ENCODE measurements at regions of chr2 and their contacts with region 1.

Region 1: GRCh38 chr2:156341452-156342253 is 9.1 kb upstream of the NR4A2 start:
- DNase-seq: peak; percentile 90
- ATAC-seq: peak; percentile 76
- H3K4me3 ChIP-seq: peak overlapping the region; percentile 95
- H3K27ac ChIP-seq: peak overlapping the region; percentile 98
- H3K4me1 ChIP-seq: peaks cover 43% of the 10 kb centered on the region
- H3K27me3 ChIP-seq: no peaks in the 10 kb centered on the region
- CTCF ChIP-seq: no peak

Region 2: DNA sequence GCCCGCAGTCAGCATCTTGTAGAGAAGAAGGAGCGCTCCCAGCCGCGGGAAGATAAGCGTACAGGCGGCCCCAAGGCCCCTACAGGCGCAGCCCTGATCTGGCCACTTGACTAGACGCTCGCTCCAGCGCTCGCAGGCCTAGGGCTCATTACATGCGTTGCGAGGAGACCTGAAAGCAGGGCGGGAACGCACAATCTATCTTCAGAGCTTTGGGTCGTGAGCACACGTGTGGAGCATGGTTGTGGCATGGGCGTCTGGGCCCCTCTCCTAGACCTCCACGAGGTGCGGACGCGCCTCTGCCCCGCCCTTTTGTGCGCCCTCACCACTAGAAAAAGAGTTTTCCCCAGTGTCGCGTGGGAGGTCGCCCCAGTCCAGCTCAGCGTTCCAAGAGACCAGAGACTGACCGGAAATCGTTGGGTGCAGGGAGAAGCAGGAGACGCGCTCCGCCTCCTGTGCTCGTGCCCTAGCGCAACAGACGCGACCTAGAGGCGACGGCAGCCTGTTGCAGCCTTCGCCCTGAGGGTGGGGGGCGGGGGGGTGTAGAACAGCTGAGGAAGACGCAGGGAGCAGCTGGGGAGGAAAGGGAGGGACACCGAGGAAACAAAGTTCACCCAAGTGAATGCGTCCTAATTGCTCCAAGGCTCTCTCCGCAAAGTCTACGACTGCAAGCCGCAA is 21.7 kb before region 1 on chr2:
- CTCF ChIA-PET with region 1: no interaction called
- POLR2A ChIA-PET with region 1: no interaction called
- intact Hi-C with region 1: no loop called
- DNase-seq: no peak
- ATAC-seq: no peak
- H3K4me3 ChIP-seq: no peak overlapping the region
- H3K27ac ChIP-seq: no peak overlapping the region
- H3K4me1 ChIP-seq: no peaks in the 10 kb centered on the region
- H3K27me3 ChIP-seq: no peaks in the 10 kb centered on the region
- CTCF ChIP-seq: no peak

Region 3: DNA sequence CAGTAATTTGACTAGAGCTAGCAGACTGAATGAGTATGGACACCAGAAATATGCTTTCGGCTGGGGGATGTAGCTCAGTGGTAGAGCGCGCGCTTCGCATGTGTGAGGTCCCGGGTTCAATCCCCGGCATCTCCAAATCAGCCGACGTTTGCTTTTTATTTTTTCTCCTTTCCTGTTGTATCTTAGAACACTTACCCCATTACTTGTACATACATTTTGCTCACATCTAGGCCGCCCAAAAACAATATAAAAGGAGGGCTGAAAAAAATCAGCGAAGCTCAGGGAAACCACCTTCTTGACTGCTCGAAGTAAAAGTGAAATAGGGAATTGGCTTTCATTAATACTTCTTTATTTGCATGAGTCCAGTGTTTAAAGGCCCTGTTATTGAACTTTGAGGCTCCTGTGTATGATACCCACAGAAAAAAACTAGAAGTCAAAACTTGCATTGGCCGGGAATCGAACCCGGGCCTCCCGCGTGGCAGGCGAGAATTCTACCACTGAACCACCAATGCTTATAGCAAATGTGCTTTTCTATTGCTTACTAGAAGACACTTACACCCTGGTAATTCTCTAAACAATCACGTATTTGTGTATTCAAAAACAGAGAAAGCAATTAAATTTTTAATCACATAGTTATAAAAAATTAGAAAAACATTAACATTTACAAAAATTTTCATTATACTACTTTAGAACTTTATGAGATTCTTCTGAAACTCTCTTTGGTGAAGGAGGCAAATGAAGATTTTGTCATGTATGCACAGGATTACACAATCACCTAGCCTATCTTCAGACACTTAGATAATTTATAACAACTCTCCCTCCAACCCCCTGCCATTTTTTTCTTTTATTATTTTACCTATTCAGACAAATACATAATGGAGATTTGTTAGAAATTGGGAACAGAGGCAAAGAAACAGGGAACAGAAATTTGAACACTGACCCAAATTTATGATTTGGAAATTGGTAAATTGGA is 59.3 kb after region 1 on chr2:
- CTCF ChIA-PET with region 1: no interaction called
- POLR2A ChIA-PET with region 1: interaction called, 5 read pairs
- intact Hi-C with region 1: loop called (anchors 1 kb)
- DNase-seq: peak; percentile 83
- ATAC-seq: peak; percentile 73
- H3K4me3 ChIP-seq: peak overlapping the region; percentile 74
- H3K27ac ChIP-seq: peak overlapping the region; percentile 91
- H3K4me1 ChIP-seq: peaks cover 21% of the 10 kb centered on the region
- H3K27me3 ChIP-seq: no peaks in the 10 kb centered on the region
- CTCF ChIP-seq: no peak

Region 4: DNA sequence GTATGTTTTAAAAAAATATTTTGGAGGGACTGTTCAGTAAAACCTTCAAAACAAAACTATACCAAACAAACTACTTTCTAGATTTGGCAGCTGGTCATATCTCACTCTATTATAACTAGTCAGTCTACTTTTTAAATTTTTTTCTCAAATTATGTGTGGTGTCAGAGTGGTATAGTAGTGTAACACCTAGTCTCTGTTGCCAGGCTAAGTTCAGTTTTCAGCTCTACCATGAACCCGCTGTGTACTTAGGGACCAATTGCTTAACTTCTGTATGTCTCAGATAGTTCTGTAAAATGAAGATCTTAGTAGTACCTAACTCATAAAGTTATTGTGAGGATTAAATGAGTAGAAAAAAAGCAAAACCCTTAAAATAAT is 148.8 kb after region 1 on chr2:
- CTCF ChIA-PET with region 1: no interaction called
- POLR2A ChIA-PET with region 1: interaction called, 26 read pairs
- intact Hi-C with region 1: no loop called
- DNase-seq: no peak
- ATAC-seq: no peak
- H3K4me3 ChIP-seq: no peak overlapping the region
- H3K27ac ChIP-seq: no peak overlapping the region
- H3K4me1 ChIP-seq: peaks cover 32% of the 10 kb centered on the region
- H3K27me3 ChIP-seq: no peaks in the 10 kb centered on the region
- CTCF ChIP-seq: no peak

Region 5: DNA sequence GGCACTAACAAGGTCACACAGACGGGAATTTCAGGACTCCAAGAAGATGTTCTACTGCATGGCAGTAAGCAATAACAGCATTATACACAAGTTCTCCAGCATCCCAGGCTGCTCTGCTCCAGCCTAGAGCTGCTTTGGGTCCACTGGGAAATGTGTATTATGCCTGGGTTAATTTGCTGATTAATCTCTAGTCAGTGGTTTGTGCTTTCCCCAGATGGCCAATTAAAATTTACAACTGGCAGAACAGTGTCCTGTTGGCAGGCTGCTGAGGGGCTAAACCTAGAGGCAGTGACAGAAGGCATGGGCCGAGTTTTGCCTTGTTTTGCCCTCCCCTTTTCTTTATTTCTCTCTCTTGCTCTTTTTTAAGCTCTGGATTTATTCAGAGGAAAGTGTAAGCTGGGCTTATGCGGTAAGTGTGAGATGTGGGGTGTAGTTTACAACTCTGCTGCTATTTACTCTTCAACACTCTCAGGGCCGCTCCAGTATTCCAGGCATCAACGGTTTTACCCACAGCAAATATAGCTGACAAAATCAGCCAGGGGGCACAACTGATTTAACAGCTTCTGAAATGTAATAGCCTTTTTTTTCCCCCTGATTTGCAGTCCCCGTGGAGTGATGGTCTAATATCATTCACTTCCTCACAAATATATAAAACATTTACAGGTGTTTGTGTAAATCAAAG is 442.5 kb after region 1 on chr2:
- CTCF ChIA-PET with region 1: no interaction called
- POLR2A ChIA-PET with region 1: no interaction called
- intact Hi-C with region 1: loop called (anchors 5 kb)
- DNase-seq: no peak
- ATAC-seq: peak; percentile 49
- H3K4me3 ChIP-seq: no peak overlapping the region
- H3K27ac ChIP-seq: no peak overlapping the region
- H3K4me1 ChIP-seq: peaks cover 38% of the 10 kb centered on the region
- H3K27me3 ChIP-seq: no peaks in the 10 kb centered on the region
- CTCF ChIP-seq: no peak

Region 6: GRCh38 chr2:157182834-157183396 is 841.3 kb after region 1 on chr2:
- CTCF ChIA-PET with region 1: no interaction called
- POLR2A ChIA-PET with region 1: no interaction called
- intact Hi-C with region 1: loop called (anchors 5 kb)
- DNase-seq: peak; percentile 95
- ATAC-seq: peak; percentile 95
- H3K4me3 ChIP-seq: no peak overlapping the region; the same call in 1 of the 2 replicates
- H3K27ac ChIP-seq: peak overlapping the region; percentile 82
- H3K4me1 ChIP-seq: peaks cover 13% of the 10 kb centered on the region
- H3K27me3 ChIP-seq: no peaks in the 10 kb centered on the region
- CTCF ChIP-seq: no peak

Region 7: DNA sequence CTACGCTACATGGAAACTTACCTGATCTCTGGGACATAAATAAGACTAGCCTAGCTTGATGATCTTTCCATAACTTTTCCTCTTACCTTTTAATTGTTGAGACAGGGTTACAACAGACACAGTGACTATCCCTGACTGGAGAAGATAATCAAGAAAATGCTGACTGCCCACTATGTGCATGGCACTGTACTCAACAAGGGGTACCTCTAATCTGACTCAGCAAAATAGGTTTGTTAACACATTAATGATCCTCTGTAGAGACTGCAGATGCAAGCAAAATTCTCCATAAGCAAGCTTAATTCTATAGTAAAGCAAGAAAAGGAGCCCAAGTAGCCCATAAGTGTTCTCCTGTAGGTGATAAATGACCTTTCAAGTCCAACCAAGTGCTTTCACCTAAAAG is 1261.5 kb after region 1 on chr2:
- CTCF ChIA-PET with region 1: no interaction called
- POLR2A ChIA-PET with region 1: no interaction called
- intact Hi-C with region 1: no loop called
- DNase-seq: no peak
- ATAC-seq: no peak
- H3K4me3 ChIP-seq: no peak overlapping the region
- H3K27ac ChIP-seq: no peak overlapping the region
- H3K4me1 ChIP-seq: no peaks in the 10 kb centered on the region
- H3K27me3 ChIP-seq: peaks cover 56% of the 10 kb centered on the region
- CTCF ChIP-seq: no peak